Psoas muscle (tissue), 8 donors: ENCODE measurements at regions of chr22 and their contacts with region 1.

Region 1: GRCh38 chr22:28772633-28773460 is at the start of gene CCDC117:
- DNase-seq: peak; percentile 96 to 97
- ATAC-seq: peak; percentile 96
- H3K4me3 ChIP-seq: peak within 1 kb of the TSS; percentile 74
- H3K27ac ChIP-seq: peak within 1 kb of the TSS; percentile 96
- H3K4me1 ChIP-seq: peaks cover 16% of the 10 kb centered on the region
- H3K27me3 ChIP-seq: no peaks in the 10 kb centered on the region
- CTCF ChIP-seq: peak; percentile 59
- total RNA-seq, gene CCDC117: 19.9 to 29.4 (median 28.1) TPM

Region 2: GRCh38 chr22:28759861-28760560 is 12.8 kb before region 1 on chr22:
- intact Hi-C with region 1: no loop called
- DNase-seq: no peak
- ATAC-seq: no peak
- H3K4me3 ChIP-seq: no peak overlapping the region
- H3K27ac ChIP-seq: no peak overlapping the region
- H3K4me1 ChIP-seq: no peaks in the 10 kb centered on the region
- H3K27me3 ChIP-seq: no peaks in the 10 kb centered on the region
- CTCF ChIP-seq: no peak

Region 3: DNA sequence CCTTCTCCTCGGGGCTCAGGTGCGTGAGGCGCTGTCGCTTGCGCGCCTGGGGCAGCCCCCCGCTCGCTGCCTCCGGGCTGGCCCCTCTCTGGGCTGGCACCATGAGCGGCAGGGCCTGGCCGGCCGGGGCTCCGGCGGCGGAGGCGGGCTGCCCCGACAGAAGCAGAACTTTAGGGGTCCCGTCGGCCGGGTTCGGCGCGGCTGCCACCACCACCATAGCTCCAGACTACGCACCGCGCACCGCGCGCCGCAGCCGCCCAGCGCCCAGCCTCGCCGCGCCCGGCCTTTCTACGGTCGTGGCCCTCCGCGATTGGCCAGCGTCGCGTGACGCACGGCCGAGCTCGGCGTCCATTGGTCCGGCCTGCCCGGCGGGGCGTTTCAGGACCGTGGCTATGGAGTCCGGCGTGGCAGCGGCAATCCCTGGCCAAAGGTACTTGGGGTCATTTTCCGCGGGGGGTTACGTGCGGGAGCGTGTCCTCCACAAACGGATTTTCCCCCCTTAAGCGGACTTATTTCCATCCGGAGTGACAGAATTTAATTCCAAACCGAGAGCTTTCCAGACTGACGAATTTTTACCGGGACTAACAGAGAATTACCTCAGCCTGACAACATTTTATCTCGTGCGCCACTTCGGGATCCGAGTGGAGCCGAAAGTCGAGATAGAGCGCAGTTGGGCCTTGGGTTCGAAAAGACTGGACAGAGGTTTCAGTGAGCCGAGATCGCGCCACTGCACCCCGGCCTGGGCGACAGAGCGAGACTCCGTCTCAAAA is 27.6 kb after region 1 on chr22 and contains the start of gene XBP1:
- intact Hi-C with region 1: loop called in 1 of 2 experiments (anchors 2 kb)
- DNase-seq: peak; percentile 95 to 97
- ATAC-seq: peak; percentile 88 to 95 (median 92)
- H3K4me3 ChIP-seq: peak within 1 kb of the TSS; percentile 82
- H3K27ac ChIP-seq: peak within 1 kb of the TSS; percentile 100
- H3K4me1 ChIP-seq: peaks cover 36% of the 10 kb centered on the region
- H3K27me3 ChIP-seq: no peaks in the 10 kb centered on the region
- CTCF ChIP-seq: no peak
- total RNA-seq, gene XBP1: 38.9 to 151 (median 98.8) TPM